Activated CD4-positive, alpha-beta T cell treated with anti-CD3 and anti-CD28 coated beads for 36 hours (primary cell): ENCODE measurements at regions of chr5 and their contacts with region 1.

Region 1: DNA sequence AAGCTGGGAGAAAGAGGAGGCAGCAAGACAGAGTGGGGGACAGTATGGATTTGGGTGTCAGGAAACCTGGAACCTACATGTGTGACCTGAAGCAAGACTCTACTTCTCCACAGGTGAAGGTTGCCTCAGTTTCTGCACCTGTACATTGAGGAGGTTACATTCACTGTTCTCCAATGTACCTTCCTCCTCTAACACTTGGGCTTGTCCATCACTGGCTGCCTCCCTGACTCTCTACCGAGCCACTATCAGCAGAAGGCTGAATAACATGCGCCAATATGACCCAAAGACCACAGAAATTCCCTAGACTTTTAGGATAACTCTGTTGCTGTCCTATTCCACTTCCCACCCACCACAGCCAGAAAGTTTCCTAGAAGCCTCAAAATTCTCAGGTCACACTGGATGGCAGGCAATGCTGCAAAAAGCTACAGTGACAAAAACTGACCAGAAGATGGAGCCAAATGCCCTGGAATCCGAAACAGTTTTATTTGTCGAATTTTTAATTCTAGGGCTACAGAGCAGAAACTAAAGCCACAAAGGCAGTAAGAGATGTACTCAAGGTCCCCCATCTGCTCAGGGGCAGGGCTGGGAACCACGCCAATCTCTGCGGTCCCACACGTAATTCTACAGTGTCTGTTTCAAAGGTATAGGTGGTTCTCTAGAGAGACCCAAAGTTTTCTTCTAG is 64.4 kb downstream of the FAM114A2 start:
- DNase-seq: peak; percentile 50
- ATAC-seq: peak; percentile 55
- H3K4me3 Mint-ChIP-seq: no peak overlapping the region
- H3K27ac Mint-ChIP-seq: no peak overlapping the region
- H3K4me1 Mint-ChIP-seq: no peaks in the 10 kb centered on the region
- H3K27me3 Mint-ChIP-seq: no peaks in the 10 kb centered on the region

Region 2: GRCh38 chr5:153987306-153987705 is 13.0 kb after region 1 on chr5:
- CTCF ChIA-PET with region 1: interaction called, 13 read pairs
- POLR2A ChIA-PET with region 1: no interaction called
- intact Hi-C with region 1: no loop called
- DNase-seq: no peak
- ATAC-seq: no peak
- H3K4me3 Mint-ChIP-seq: no peak overlapping the region
- H3K27ac Mint-ChIP-seq: no peak overlapping the region
- H3K4me1 Mint-ChIP-seq: no peaks in the 10 kb centered on the region
- H3K27me3 Mint-ChIP-seq: no peaks in the 10 kb centered on the region

Region 3: DNA sequence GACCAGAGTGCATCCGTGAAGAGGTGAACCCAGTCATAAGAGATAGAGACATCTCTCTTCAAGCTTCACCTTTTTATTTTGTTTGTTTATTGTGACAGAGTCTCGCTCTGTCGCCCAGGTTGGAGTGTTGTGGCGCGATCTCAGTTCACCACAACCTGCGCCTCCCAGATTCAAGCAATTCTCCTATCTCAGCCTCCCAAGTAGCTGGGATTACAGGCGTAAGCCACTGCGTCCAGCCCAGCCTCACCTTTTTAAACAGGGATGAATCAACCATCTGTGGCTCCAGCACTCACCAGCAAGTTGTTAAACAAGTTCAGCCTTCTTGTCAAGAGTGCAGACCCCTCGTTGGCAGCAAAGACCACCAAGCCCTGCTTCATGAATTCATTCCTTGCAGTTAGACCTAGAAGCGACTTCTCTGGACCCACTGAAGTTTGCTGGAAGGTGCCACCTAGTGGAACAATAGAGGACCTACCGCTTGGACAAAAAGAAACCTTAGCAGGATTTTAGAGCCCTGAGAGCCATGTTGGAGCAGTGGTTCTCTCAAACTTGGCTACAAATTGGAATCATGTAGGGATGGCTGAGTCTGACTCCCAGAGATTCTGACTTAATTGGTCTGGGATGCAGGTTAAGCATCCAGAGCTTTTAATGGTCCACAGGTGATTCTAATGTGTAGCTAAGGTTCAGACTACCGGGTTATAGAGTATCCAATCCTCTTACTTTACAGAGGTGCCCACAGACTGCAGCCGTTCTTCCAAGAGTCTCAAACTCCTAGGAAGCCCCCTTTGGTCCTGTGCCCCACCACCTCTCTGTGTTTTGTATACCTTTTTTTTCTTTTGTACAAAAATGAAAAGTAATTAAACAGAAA is 205.8 kb after region 1 on chr5:
- CTCF ChIA-PET with region 1: interaction called, 17 read pairs
- POLR2A ChIA-PET with region 1: no interaction called
- intact Hi-C with region 1: loop called (anchors 1 to 5 kb)
- DNase-seq: peak; percentile 46
- ATAC-seq: peak; percentile 98
- H3K4me3 Mint-ChIP-seq: no peak overlapping the region
- H3K27ac Mint-ChIP-seq: no peak overlapping the region
- H3K4me1 Mint-ChIP-seq: no peaks in the 10 kb centered on the region
- H3K27me3 Mint-ChIP-seq: peaks cover 7% of the 10 kb centered on the region

Region 4: DNA sequence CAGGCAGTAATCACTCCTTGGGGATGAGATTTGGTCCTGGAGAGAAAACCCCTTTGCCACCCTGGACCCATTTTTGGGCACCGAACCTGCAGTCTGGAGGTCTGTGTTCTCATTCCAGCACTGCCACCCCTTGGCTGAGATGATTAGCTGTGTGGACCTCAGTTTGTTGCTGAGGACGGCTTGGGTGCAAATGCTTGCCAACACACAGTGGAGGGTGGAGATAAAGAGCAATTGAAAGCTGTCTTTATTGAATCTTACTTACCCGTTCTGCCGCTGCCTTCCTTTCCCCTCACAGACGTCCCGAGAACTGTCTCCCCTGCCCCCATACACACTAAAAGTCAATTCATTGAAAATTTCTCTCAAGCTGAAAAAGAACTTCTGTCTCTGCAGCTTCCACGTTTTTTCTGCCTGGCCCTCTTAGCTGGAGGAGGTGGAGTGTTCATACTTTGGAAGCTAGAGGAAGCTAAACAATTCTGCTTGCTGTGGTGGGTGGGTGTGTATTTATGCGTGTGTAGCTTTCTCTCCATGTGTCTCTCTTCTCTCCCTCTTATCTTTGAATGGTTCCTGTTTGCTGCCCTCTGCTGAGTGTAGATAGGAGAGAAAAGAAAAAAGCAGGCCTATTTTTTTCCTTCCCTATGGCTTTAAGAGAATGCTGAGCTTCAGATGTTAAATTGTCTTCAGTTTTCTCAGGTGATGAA is 222.8 kb after region 1 on chr5:
- CTCF ChIA-PET with region 1: interaction called, 4 read pairs
- POLR2A ChIA-PET with region 1: no interaction called
- intact Hi-C with region 1: loop called in 1 of 2 experiments (anchors 5 kb)
- DNase-seq: peak; percentile 35
- ATAC-seq: no peak
- H3K4me3 Mint-ChIP-seq: peak overlapping the region; percentile 35
- H3K27ac Mint-ChIP-seq: peak overlapping the region; percentile 90
- H3K4me1 Mint-ChIP-seq: peaks cover 71% of the 10 kb centered on the region
- H3K27me3 Mint-ChIP-seq: no peaks in the 10 kb centered on the region

Region 5: GRCh38 chr5:154467655-154468354 is 493.5 kb after region 1 on chr5:
- CTCF ChIA-PET with region 1: interaction called, 5 read pairs
- POLR2A ChIA-PET with region 1: no interaction called
- intact Hi-C with region 1: loop called in 1 of 2 experiments (anchors 2 kb)
- DNase-seq: peak; percentile 90
- ATAC-seq: peak; percentile 98
- H3K4me3 Mint-ChIP-seq: no peak overlapping the region
- H3K27ac Mint-ChIP-seq: no peak overlapping the region
- H3K4me1 Mint-ChIP-seq: peaks cover 7% of the 10 kb centered on the region
- H3K27me3 Mint-ChIP-seq: peaks cover 31% of the 10 kb centered on the region

Region 6: GRCh38 chr5:154610321-154611154 is 636.3 kb after region 1 on chr5:
- CTCF ChIA-PET with region 1: no interaction called
- POLR2A ChIA-PET with region 1: no interaction called
- intact Hi-C with region 1: loop called (anchors 1 to 10 kb)
- DNase-seq: peak; percentile 89
- ATAC-seq: peak; percentile 98
- H3K4me3 Mint-ChIP-seq: peak overlapping the region; percentile 22
- H3K27ac Mint-ChIP-seq: no peak overlapping the region
- H3K4me1 Mint-ChIP-seq: peaks cover 7% of the 10 kb centered on the region
- H3K27me3 Mint-ChIP-seq: peaks cover 36% of the 10 kb centered on the region